Transverse colon (tissue), 4 donors: ENCODE measurements at regions of chr6 and their contacts with region 1.

Region 1: DNA sequence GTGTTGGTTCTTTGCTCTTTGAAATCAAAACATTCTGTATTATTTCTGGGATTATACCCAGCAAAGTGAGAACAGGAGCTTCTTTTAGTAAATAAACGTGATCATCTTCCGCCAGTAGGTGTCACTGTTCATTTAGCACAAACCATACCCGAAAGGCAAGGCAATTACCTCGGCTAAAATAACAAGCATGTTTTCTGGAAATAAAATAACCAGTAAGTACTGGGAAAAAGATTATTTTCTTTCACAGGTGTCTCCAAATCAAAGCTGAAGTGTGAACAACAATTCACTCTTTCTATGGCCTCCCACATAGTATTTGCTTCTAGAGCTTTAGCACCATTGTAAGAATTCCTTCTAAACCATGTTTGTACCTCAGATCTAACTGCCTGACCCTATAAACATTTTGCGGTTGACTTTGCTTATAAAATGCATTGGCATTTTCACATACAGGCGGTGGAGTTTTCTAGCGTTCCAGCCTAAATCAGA is 144.6 kb upstream of the AGPAT4 start:
- DNase-seq: peak; percentile 12
- H3K4me3 ChIP-seq: no peak overlapping the region
- H3K27ac ChIP-seq: no peak overlapping the region
- H3K4me1 ChIP-seq: peaks cover 0 to 2% (median 0%) of the 10 kb centered on the region in 4 donors
- H3K27me3 ChIP-seq: no peaks in the 10 kb centered on the region
- CTCF ChIP-seq: peak; percentile 52 to 67 (median 63)
- EP300 ChIP-seq: no peak
- POLR2A ChIP-seq: no peak

Region 2: DNA sequence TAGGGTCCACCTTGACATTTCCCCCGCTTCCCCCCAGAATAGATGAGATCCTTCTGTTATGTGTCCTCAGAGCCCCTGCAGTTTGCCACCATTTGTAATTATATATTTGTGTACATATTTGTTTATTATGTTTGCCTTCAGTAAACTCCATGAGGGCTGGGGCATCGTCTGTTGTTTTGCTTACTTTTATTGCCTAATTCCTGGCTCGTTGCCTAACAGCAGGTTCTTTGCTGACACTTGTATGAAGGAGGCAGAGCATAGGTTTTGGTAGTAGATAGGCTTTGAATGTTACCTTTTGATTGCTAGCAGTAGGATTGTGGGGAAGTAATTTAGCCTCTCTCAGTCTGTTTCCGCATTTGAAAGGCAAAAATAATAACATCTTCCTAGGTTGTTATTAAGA is 417.1 kb before region 1 on chr6:
- in situ Hi-C with region 1: no loop called
- intact Hi-C with region 1: no loop called
- DNase-seq: no peak
- H3K4me3 ChIP-seq: no peak overlapping the region
- H3K27ac ChIP-seq: no peak overlapping the region
- H3K4me1 ChIP-seq: peaks cover 0 to 14% (median 6%) of the 10 kb centered on the region in 4 donors
- H3K27me3 ChIP-seq: no peaks in the 10 kb centered on the region
- CTCF ChIP-seq: no peak
- EP300 ChIP-seq: no peak
- POLR2A ChIP-seq: no peak

Region 3: GRCh38 chr6:161476711-161477110 is 58.2 kb after region 1 on chr6:
- in situ Hi-C with region 1: no loop called
- intact Hi-C with region 1: no loop called
- DNase-seq: no peak
- H3K4me3 ChIP-seq: no peak overlapping the region
- H3K27ac ChIP-seq: no peak overlapping the region
- H3K4me1 ChIP-seq: no peaks in the 10 kb centered on the region
- H3K27me3 ChIP-seq: no peaks in the 10 kb centered on the region
- CTCF ChIP-seq: no peak
- EP300 ChIP-seq: no peak
- POLR2A ChIP-seq: no peak

Region 4: DNA sequence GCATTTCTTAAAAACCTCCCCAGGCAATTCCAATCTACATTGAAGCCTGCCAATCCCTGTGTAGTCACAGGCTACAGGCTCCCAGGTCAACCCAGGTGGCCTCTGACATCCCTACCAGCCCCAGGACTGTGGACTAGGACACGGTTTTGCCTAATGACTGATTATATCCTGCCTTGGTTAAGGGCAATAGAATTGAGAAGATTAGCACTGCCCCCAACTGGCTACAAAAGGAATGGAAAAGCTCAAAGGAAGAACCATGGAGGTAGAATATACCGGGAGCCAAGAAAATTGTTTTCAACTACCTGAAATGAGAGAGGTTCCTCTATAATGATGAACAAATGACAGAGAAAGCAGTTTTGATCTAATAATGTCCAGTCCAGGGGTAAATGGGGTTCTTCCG is 276.5 kb after region 1 on chr6:
- in situ Hi-C with region 1: loop called in 2 of 4 experiments (anchors 25 kb)
- intact Hi-C with region 1: loop called (anchors 10 kb)
- DNase-seq: no peak
- H3K4me3 ChIP-seq: no peak overlapping the region
- H3K27ac ChIP-seq: no peak overlapping the region
- H3K4me1 ChIP-seq: no peaks in the 10 kb centered on the region
- H3K27me3 ChIP-seq: no peaks in the 10 kb centered on the region
- CTCF ChIP-seq: peak; percentile 16 to 30 (median 28)
- EP300 ChIP-seq: no peak
- POLR2A ChIP-seq: no peak

Region 5: DNA sequence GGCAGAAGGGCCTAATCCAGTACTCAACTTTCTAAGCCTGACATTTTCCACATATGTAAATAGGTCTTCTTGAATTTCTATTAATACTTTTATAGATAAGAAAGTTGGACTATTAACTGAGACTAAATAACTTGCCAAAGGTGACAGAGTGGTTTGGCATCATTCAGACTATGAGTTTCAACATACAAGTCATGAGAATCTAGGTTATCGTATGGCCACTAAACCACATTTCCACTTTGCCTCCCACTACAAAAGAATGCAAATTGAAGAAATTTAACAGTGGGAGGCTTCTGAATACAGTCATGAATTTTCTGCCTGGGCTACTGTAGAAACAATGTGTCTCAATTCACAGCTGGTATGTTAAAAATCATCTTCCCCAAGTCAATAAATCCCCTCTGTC is 386.3 kb after region 1 on chr6:
- in situ Hi-C with region 1: no loop called
- intact Hi-C with region 1: no loop called
- DNase-seq: no peak
- H3K4me3 ChIP-seq: no peak overlapping the region
- H3K27ac ChIP-seq: no peak overlapping the region
- H3K4me1 ChIP-seq: no peaks in the 10 kb centered on the region
- H3K27me3 ChIP-seq: no peaks in the 10 kb centered on the region
- CTCF ChIP-seq: no peak
- EP300 ChIP-seq: no peak
- POLR2A ChIP-seq: no peak

Region 6: DNA sequence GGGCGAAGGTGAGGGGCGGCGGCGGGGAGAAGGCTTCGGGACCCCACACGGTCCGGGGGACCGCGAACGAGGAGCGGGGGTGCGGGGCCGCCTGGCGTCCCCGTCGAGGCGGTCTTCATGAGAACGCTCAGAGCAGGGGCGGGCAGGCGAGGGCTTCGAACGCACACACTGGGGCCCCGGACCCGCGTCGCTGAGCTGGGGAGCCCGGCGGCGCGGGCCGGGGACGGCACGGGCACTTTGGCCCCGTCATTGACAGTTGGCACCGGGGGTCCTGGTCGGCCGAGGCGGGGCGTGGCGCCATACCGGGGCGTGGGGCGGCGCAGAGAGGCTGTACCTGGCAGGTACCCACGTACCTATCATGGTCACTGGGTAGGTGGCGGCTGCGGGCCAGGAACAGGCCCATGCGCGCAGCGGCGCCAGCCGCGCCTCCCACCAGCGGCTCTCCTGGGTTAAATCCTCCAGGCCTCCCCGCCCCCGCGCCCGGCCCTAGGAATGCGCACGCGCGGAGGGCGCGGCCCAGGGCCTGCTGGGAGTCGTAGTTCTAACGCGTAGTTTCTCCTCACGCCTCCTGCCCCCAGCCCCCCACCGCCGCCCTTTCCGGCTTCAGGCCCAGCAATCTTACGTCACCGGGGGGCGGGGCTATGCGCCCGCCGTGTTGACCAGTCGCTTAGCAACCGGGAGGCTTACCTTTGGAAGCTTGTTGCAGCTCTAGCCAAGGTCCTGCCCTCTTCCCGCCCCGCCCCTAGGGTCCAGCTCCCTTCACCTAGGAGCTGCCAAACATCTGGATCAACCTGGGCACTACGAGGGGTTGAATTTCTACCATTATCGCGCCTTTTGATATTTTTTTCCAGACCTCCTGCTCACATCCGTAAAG is 1309.0 kb after region 1 on chr6 and contains the starts of genes PACRG and PRKN:
- in situ Hi-C with region 1: loop called in 1 of 4 experiments (anchors 25 kb)
- intact Hi-C with region 1: no loop called
- DNase-seq: peak; percentile 100
- H3K4me3 ChIP-seq: peak within 1 kb of the TSS; percentile 77 to 95 (median 88)
- H3K27ac ChIP-seq: peak within 1 kb of the TSS; percentile 89 to 93 (median 92)
- H3K4me1 ChIP-seq: peaks cover 0 to 30% (median 11%) of the 10 kb centered on the region in 4 donors
- H3K27me3 ChIP-seq: no peaks in the 10 kb centered on the region
- CTCF ChIP-seq: peak in 1 of 5 experiments; percentile 15
- EP300 ChIP-seq: peak; percentile 62
- POLR2A ChIP-seq: peak; percentile 97
- total RNA-seq, gene PACRG: 1.2 to 13.8 (median 1.4) TPM in 3 of 4 donors, not detected in the other
- total RNA-seq, gene PRKN: 4.5 to 12.3 (median 9.0) TPM

Region 7: DNA sequence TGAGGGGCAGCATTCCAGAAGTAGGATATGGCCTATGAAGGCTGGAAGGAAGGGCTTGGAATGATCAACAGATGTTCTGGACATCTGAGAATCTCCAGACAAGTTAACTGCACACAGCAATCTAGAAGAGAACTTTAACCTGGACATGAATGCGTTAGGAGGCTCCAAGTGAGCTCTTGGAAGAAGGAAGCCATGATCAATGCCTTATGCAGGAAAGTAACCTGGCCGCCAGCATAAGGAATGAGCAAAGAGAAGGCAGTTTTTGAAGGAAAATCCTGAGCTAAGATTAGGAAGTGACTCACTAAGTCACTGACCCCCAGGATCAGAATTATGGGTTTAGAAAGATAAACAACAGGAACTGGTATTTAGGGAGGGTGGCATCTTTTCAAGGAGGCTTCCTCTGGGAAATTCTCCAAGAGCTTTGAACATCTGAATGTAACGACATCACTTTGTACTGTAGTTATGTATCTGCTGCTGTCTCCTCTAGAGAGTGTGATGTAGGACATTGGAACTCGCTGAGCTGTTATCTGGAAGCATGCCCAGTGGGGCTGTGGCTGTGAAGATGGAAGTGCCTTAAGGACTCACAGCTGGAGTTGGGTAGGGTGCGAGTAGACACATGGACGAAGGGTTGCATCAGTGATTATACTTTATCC is 1546.1 kb after region 1 on chr6:
- in situ Hi-C with region 1: no loop called
- intact Hi-C with region 1: loop called (anchors 5 kb)
- DNase-seq: no peak
- H3K4me3 ChIP-seq: no peak overlapping the region
- H3K27ac ChIP-seq: no peak overlapping the region
- H3K4me1 ChIP-seq: no peaks in the 10 kb centered on the region
- H3K27me3 ChIP-seq: no peaks in the 10 kb centered on the region
- CTCF ChIP-seq: no peak
- EP300 ChIP-seq: no peak
- POLR2A ChIP-seq: no peak

Region 8: GRCh38 chr6:163026893-163027292 is 1608.4 kb after region 1 on chr6:
- in situ Hi-C with region 1: no loop called
- intact Hi-C with region 1: no loop called
- DNase-seq: no peak
- H3K4me3 ChIP-seq: no peak overlapping the region
- H3K27ac ChIP-seq: no peak overlapping the region
- H3K4me1 ChIP-seq: no peaks in the 10 kb centered on the region
- H3K27me3 ChIP-seq: no peaks in the 10 kb centered on the region
- CTCF ChIP-seq: no peak
- EP300 ChIP-seq: no peak
- POLR2A ChIP-seq: no peak